ENCODE measurements at regions of chr7 and their contacts with region 1.

Region 1: GRCh38 chr7:47254081-47255006 is 327.6 kb downstream of the TNS3 start:
- DNase-seq: peak; percentile 36
- H3K4me3 ChIP-seq: peak overlapping the region; percentile 50 to 71 (median 62)
- H3K27ac ChIP-seq: no peak overlapping the region
- H3K4me1 ChIP-seq: peaks cover 13% of the 10 kb centered on the region
- H3K27me3 ChIP-seq: no peaks in the 10 kb centered on the region
- CTCF ChIP-seq: peak; percentile 58 to 69

Region 2: DNA sequence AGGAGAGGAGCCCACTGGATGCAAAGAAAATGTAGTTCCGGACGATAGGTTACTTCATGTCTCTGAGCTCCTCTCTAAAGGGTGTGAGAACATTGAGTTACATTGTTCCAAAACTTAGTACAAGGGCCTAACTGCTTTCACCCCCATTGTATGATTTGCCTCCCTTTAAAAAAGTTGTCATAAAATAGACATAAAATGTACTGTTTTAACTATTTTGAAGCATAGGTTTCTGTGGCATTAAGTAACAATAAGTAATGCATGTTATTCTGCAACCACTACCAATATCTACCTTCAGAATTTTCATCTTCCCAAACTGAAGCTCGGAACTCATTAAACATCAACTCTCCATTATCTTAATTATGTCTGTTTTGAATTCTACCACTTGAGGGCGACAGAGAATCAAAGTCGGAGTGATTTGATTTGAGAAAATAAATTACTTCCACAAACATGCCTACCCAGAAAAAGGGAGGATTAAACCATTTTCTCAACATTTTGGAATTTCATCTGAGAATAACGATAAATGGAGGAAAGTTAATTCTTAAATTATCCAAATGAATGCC is 1363.4 kb before region 1 on chr7:
- CTCF ChIA-PET with region 1: interaction called, 5 read pairs
- dilution Hi-C with region 1: no loop called
- in situ Hi-C with region 1: no loop called
- intact Hi-C with region 1: loop called (anchors 2 kb)
- DNase-seq: peak; percentile 18
- H3K4me3 ChIP-seq: no peak overlapping the region
- H3K27ac ChIP-seq: no peak overlapping the region
- H3K4me1 ChIP-seq: peaks cover 8% of the 10 kb centered on the region
- H3K27me3 ChIP-seq: peaks cover 4% of the 10 kb centered on the region
- CTCF ChIP-seq: peak; percentile 43 to 54

Region 3: DNA sequence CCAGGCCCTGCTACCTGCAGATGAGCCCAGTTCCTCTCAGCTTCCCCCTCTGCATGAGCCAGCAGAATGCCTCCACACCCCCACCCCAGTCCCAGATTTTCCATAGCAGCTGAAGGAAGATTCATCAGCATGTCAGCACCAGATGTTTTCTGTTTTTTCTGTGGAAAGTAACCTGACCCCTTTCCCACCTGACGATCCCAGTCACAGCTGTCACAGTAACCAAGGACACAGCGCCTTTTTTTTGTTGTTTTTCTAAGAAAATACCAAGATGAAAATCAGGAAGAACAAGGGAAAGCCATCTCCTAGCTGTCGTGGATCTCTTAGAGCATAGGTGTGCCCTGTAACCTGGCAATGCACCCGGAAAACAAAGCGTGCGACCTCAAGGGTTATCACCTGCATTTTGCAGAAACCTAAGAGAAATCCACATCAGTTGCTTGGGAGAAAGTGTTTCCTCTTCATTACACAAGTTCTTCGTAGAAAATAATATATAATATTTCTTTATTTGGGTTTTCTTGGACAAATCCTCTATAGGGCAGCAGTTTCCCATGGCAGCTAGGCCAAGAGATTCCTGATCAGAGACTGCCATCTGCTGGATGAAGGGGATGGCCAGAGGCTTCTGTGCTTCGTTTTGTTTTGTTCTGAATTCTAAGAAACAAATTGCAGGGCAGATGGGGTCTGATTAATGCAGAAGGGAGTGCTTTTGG is 74.4 kb before region 1 on chr7:
- CTCF ChIA-PET with region 1: no interaction called
- dilution Hi-C with region 1: loop called (anchors 5 kb)
- in situ Hi-C with region 1: no loop called
- intact Hi-C with region 1: no loop called
- DNase-seq: peak; percentile 29
- H3K4me3 ChIP-seq: no peak overlapping the region
- H3K27ac ChIP-seq: no peak overlapping the region
- H3K4me1 ChIP-seq: no peaks in the 10 kb centered on the region
- H3K27me3 ChIP-seq: no peaks in the 10 kb centered on the region
- CTCF ChIP-seq: peak; percentile 85